Testis (tissue), 5 donors: ENCODE measurements at regions of chr10 and their contacts with region 1.

Region 1: DNA sequence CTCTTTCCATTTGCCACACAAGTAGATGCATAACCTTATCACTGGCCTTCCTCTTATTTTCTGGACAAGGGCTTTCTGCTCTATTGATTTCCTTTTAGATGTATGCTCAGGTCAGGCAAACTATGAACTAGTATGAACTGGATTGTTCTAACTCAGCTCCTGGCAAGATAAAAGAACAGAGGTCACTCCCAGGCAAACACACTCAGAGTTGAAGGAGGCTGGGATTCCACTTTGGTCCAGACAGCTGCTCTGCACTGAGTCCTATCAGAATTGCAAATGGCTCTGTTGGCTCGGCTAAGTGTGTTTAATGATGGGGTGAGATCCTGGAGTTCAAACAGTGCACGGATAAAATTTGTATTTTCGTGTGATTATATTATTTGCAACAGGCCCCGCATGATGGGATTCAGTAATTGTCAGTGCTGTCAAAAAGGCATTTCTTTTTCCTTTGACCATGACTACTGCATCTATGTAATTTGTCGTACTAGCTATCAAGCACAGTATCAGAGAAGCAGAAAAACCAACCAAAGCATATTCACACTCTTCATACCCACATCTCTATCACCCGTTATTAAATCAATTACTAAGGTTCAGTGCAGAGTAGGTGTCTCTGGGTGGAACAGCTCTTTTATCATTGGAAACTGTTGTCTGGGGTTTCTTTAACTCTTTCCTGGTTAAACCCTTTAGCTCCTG is 288.1 kb upstream of the PRKCQ start:
- DNase-seq: no peak
- H3K4me3 ChIP-seq: no peak overlapping the region
- H3K27ac ChIP-seq: no peak overlapping the region
- H3K4me1 ChIP-seq: no peaks in the 10 kb centered on the region
- H3K27me3 ChIP-seq: no peaks in the 10 kb centered on the region
- CTCF ChIP-seq: no peak
- POLR2A ChIP-seq: no peak

Region 2: DNA sequence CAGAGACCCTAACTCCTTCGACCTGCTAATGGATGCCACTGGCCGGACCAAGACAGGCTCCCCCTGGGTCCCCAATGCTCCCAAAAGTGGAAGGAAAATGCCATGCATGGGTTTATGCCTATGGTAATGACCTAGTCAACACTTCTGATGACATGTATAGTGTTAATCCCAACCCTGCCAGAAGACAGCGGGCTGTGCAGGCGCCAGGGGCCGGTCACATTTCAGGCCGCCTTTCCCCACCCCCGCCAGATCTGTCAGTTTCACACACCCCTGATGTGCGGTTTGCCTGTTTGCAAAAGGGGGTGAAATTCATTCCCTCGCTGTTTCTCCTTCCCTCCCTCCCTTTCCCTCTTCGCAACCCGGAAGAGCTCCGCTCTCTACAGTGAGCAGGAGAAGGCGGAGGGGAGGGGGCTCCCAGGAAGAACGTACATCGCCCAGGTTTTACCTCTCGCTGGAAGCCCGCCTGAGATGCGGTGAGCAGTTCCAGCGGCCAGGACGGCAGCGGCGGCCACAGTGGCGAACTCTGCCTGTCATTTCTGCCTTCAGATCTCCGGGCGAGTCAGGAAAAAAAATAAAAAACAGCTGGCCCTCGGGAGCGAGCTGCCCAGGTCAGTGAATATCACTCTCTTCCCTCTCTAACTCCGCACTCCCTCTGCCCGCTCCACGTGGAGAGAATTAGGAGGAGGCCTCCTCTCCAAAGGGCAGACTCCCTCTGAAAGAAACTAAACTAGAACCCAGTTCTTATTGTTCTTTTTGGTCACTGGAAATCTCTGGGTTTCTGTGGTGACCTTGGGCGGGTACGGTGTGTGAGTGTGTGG is 1176.9 kb after region 1 on chr10:
- intact Hi-C with region 1: loop called (anchors 10 kb)
- DNase-seq: no peak
- H3K4me3 ChIP-seq: no peak overlapping the region
- H3K27ac ChIP-seq: no peak overlapping the region
- H3K4me1 ChIP-seq: peaks cover 10% of the 10 kb centered on the region
- H3K27me3 ChIP-seq: peaks cover under 1% of the 10 kb centered on the region
- CTCF ChIP-seq: no peak
- POLR2A ChIP-seq: no peak